Body of pancreas (tissue), 4 donors: ENCODE measurements at regions of chr13 and their contacts with region 1.

Region 1: GRCh38 chr13:20495082-20496023 is 30.3 kb downstream of the CRYL1 start:
- DNase-seq: peak; percentile 73 to 79 (median 74)
- ATAC-seq: peak; percentile 89
- H3K4me3 ChIP-seq: no peak overlapping the region
- H3K27ac ChIP-seq: no peak overlapping the region
- H3K4me1 ChIP-seq: no peaks in the 10 kb centered on the region
- H3K27me3 ChIP-seq: no peaks in the 10 kb centered on the region
- CTCF ChIP-seq: peak; percentile 80 to 98 (median 90)
- POLR2A ChIP-seq: no peak

Region 2: DNA sequence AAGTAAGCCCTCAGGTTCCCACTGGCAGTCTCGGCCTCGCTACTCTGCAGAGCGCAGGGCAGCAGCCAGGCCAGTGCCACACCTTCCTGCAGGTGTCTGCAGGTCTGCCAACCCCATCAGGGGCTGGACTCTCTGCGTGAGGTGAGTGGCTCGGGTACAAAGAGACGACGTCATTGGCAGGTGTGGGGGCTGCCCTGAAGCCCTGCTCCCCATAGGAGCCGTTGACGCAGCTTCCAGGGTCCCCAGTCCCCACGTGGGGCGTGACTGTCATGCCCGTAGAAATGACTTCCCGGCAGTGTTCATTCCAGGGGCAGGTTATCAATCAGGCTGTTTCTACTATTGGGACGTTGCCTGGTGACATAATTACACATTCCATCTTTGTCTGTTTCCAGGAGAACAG is 247.9 kb before region 1 on chr13:
- intact Hi-C with region 1: no loop called
- DNase-seq: peak; percentile 22 to 56 (median 46)
- ATAC-seq: peak; percentile 77
- H3K4me3 ChIP-seq: no peak overlapping the region
- H3K27ac ChIP-seq: peak overlapping the region in 1 of 4 donors; percentile 35
- H3K4me1 ChIP-seq: peaks cover 15% of the 10 kb centered on the region
- H3K27me3 ChIP-seq: no peaks in the 10 kb centered on the region
- CTCF ChIP-seq: no peak
- POLR2A ChIP-seq: no peak

Region 3: GRCh38 chr13:20828539-20829364 is 333.4 kb after region 1 on chr13:
- intact Hi-C with region 1: loop called (anchors 5 kb)
- DNase-seq: peak in 3 of 4 donors; percentile 12 to 23 (median 17)
- ATAC-seq: peak; percentile 73
- H3K4me3 ChIP-seq: no peak overlapping the region
- H3K27ac ChIP-seq: no peak overlapping the region
- H3K4me1 ChIP-seq: no peaks in the 10 kb centered on the region
- H3K27me3 ChIP-seq: no peaks in the 10 kb centered on the region
- CTCF ChIP-seq: peak; percentile 44 to 84 (median 76)
- POLR2A ChIP-seq: no peak

Region 4: GRCh38 chr13:20924758-20925394 is 429.5 kb after region 1 on chr13:
- intact Hi-C with region 1: loop called (anchors 5 kb)
- DNase-seq: peak; percentile 70 to 86 (median 80)
- ATAC-seq: peak; percentile 47
- H3K4me3 ChIP-seq: no peak overlapping the region
- H3K27ac ChIP-seq: no peak overlapping the region
- H3K4me1 ChIP-seq: no peaks in the 10 kb centered on the region
- H3K27me3 ChIP-seq: no peaks in the 10 kb centered on the region
- CTCF ChIP-seq: peak; percentile 57 to 71 (median 68)
- POLR2A ChIP-seq: no peak

Region 5: GRCh38 chr13:20938303-20938702 is 442.9 kb after region 1 on chr13:
- intact Hi-C with region 1: no loop called
- DNase-seq: no peak
- ATAC-seq: no peak
- H3K4me3 ChIP-seq: no peak overlapping the region
- H3K27ac ChIP-seq: no peak overlapping the region
- H3K4me1 ChIP-seq: peaks cover 4% of the 10 kb centered on the region
- H3K27me3 ChIP-seq: no peaks in the 10 kb centered on the region
- CTCF ChIP-seq: no peak
- POLR2A ChIP-seq: no peak